PC-3 (cell line): ENCODE measurements at regions of chr7 and their contacts with region 1.

Region 1: GRCh38 chr7:142557971-142558582 is 191.2 kb upstream of the PRSS1 start:
- DNase-seq: peak; percentile 79
- ATAC-seq: peak; percentile 20; the same call in 1 of the 2 replicates
- H3K4me3 ChIP-seq: no peak overlapping the region
- H3K27ac ChIP-seq: peak overlapping the region; percentile 58; the same call in 1 of the 2 replicates
- H3K4me1 ChIP-seq: peaks cover 67% of the 10 kb centered on the region
- H3K27me3 ChIP-seq: no peaks in the 10 kb centered on the region
- CTCF ChIP-seq: peak; percentile 92

Region 2: GRCh38 chr7:142338633-142339501 is 219.2 kb before region 1 on chr7:
- CTCF ChIA-PET with region 1: no interaction called
- POLR2A ChIA-PET with region 1: no interaction called
- intact Hi-C with region 1: no loop called
- DNase-seq: peak; percentile 61
- ATAC-seq: peak; percentile 64
- H3K4me3 ChIP-seq: no peak overlapping the region
- H3K27ac ChIP-seq: no peak overlapping the region
- H3K4me1 ChIP-seq: no peaks in the 10 kb centered on the region
- H3K27me3 ChIP-seq: peaks cover 68% of the 10 kb centered on the region
- CTCF ChIP-seq: peak; percentile 64

Region 3: GRCh38 chr7:142587578-142588191 is 29.6 kb after region 1 on chr7:
- CTCF ChIA-PET with region 1: interaction called, 14 read pairs
- POLR2A ChIA-PET with region 1: no interaction called
- intact Hi-C with region 1: loop called (anchors 2 kb)
- DNase-seq: peak; percentile 82
- ATAC-seq: peak; percentile 75
- H3K4me3 ChIP-seq: no peak overlapping the region
- H3K27ac ChIP-seq: no peak overlapping the region
- H3K4me1 ChIP-seq: peaks cover 25% of the 10 kb centered on the region
- H3K27me3 ChIP-seq: no peaks in the 10 kb centered on the region
- CTCF ChIP-seq: peak; percentile 96

Region 4: DNA sequence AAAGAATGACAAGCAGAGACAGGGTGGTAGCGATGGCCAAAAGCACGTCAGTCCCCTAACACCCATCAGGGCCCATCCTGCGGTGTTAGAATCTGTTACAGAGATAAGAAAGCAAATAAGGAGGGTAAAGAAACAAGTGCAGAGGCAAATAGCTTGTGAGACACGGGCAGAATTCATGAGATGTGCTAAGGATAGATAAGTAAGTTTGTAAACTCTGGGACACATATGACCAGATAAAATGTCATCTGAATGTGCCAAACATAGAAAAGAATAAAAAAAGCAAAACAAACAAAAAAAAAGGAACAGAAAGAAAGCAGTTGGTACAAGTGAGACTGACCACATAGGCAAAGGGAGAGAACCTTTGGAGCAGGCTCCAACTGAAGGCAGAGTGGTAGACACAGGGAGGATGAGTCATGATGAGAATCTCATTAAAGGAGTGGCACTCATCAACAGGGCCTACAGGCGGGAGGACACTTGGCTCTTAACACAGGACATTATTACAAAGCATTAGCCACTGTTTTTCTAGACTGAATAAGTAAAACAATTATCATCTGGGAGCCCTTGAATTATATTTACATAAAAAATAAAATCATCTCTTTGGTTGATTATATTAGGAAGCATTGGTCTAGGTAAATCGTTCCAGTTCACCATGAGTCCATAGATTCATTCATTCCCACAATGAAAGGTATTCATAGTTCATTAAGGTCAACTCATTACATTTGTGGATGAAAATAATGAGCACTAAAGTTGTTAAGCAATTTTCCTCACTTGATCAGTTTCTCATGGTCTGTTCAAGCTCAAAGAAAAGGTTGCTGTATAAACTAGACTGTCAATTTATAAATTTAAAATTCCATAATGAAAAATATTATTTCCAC is 275.3 kb after region 1 on chr7:
- CTCF ChIA-PET with region 1: no interaction called
- POLR2A ChIA-PET with region 1: no interaction called
- intact Hi-C with region 1: no loop called
- DNase-seq: peak; percentile 78
- ATAC-seq: peak; percentile 95
- H3K4me3 ChIP-seq: no peak overlapping the region
- H3K27ac ChIP-seq: peak overlapping the region; percentile 72
- H3K4me1 ChIP-seq: peaks cover 34% of the 10 kb centered on the region
- H3K27me3 ChIP-seq: no peaks in the 10 kb centered on the region
- CTCF ChIP-seq: no peak